PC-9 (cell line): ENCODE measurements at regions of chr12 and their contacts with region 1.

Region 1: GRCh38 chr12:57033428-57033827 is 16.5 kb downstream of the MYO1A start:
- DNase-seq: peak in 1 of 2 experiments; percentile 33
- H3K4me3 ChIP-seq: no peak overlapping the region
- H3K27ac ChIP-seq: no peak overlapping the region
- H3K4me1 ChIP-seq: no peaks in the 10 kb centered on the region
- H3K27me3 ChIP-seq: peaks cover 37% of the 10 kb centered on the region
- CTCF ChIP-seq: no peak

Region 2: GRCh38 chr12:56979628-56980027 is 53.8 kb before region 1 on chr12:
- CTCF ChIA-PET with region 1: no interaction called
- POLR2A ChIA-PET with region 1: no interaction called
- intact Hi-C with region 1: loop called (anchors 2 kb)
- DNase-seq: no peak
- H3K4me3 ChIP-seq: no peak overlapping the region
- H3K27ac ChIP-seq: no peak overlapping the region
- H3K4me1 ChIP-seq: no peaks in the 10 kb centered on the region
- H3K27me3 ChIP-seq: no peaks in the 10 kb centered on the region
- CTCF ChIP-seq: no peak

Region 3: GRCh38 chr12:57005980-57006808 is 27.2 kb before region 1 on chr12 and contains the start of gene ZBTB39:
- CTCF ChIA-PET with region 1: no interaction called
- POLR2A ChIA-PET with region 1: no interaction called
- intact Hi-C with region 1: no loop called
- DNase-seq: peak in 1 of 2 experiments; percentile 70
- H3K4me3 ChIP-seq: peak within 1 kb of the TSS; percentile 62
- H3K27ac ChIP-seq: no peak within 1 kb of the TSS
- H3K4me1 ChIP-seq: peaks cover 11% of the 10 kb centered on the region
- H3K27me3 ChIP-seq: no peaks in the 10 kb centered on the region
- CTCF ChIP-seq: peak; percentile 68; the same call in 1 of the 2 replicates
- total RNA-seq, gene ZBTB39: 6.5 and 7.6 TPM in 2 replicates

Region 4: DNA sequence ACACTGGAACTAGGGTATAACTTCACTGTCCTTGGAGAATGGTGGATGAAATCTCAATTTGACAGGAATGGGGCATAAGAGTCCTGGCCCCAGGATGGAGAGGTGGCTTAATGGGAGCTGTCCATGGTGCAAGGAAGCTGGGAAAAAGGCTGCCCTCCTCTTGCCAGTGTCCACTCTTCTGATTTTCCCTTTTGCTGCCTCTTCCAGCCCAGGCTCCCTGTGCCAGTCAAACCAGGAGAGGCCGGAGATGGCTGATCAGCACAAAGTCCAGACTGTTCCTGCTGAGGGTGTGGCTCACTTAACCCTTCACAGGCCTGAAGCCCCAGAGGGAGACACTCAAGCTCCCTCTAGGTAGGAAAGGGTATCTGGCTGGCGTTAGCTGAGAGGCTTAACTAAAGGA is 16.5 kb after region 1 on chr12 and contains the start of gene MYO1A:
- CTCF ChIA-PET with region 1: no interaction called
- POLR2A ChIA-PET with region 1: no interaction called
- intact Hi-C with region 1: no loop called
- DNase-seq: peak in 1 of 2 experiments; percentile 5
- H3K4me3 ChIP-seq: no peak within 1 kb of the TSS
- H3K27ac ChIP-seq: no peak within 1 kb of the TSS
- H3K4me1 ChIP-seq: no peaks in the 10 kb centered on the region
- H3K27me3 ChIP-seq: peaks cover 42% of the 10 kb centered on the region; the same call in 1 of the 2 replicates
- CTCF ChIP-seq: no peak
- total RNA-seq, gene MYO1A: not detected in 2 replicates

Region 5: DNA sequence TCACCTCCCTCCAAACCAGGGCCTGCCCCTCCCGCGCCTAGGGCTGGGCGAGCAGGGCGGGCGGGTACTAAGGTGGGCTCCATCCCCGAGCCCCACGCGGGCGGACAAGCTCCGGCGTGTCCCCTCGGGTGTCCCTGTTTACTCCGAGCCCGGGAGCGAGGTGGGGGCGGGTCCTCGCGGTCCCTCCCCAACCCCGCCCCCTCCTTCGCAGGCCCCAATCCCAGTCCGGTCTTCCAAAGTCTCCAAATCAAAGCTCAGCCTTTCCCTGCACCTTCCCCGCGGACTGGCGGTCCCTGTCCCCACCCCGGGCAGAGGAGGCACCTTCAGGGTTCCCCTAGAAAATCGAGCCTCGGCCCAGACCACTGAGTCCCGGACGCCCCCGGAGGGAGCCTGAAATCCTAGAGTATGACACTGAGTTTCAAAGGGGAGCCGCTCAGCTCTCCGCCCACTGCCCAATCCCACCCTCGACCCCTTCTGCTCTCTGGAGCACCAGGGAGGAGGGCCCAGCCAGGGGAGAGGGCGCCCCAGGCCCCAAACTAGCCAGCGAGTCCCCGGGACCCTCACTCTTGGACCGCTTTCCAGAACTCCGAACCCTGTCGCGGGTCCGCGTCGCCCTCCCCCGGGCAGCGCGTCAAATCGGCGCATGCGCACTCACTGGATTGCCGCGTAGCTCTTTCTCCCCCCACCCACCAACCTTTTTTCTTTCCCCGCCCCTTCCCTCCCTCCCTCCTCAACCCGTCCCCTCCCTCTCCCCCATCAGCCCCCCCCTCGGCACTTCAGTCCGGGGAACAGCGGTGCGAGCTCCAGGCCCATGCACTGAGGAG is 94.5 kb after region 1 on chr12 and contains the start of gene LRP1:
- CTCF ChIA-PET with region 1: no interaction called
- POLR2A ChIA-PET with region 1: no interaction called
- intact Hi-C with region 1: no loop called
- DNase-seq: peak; percentile 68 to 80
- H3K4me3 ChIP-seq: peak within 1 kb of the TSS; percentile 97
- H3K27ac ChIP-seq: peak within 1 kb of the TSS; percentile 44
- H3K4me1 ChIP-seq: peaks cover 8% of the 10 kb centered on the region
- H3K27me3 ChIP-seq: no peaks in the 10 kb centered on the region
- CTCF ChIP-seq: no peak
- total RNA-seq, gene LRP1: 51.4 and 70.1 TPM in 2 replicates